H1 (cell line): ENCODE measurements at regions of chr6 and their contacts with region 1.

Region 1: DNA sequence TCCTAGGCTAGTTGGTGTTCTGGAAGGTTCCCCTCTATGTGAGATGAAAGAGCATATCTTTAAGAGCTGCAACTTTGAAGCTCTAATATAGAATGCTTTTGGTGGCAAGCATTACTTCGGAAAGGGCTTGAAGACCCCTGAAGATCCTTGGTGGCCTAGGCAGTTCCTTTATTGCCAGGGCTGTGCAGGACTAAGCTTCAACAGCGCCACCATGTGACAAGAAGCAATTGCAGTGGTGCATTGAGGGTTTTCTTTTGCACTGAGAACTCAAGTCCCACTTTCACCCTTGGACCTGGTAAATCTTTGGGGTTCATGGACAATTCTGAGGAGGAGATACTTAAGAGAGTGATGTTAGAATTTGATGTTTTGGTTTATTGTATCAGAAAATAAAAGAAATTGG is 237.4 kb upstream of the GMDS start:
- DNase-seq: no peak
- H3K4me3 ChIP-seq: no peak overlapping the region
- H3K27ac ChIP-seq: no peak overlapping the region
- H3K4me1 ChIP-seq: no peaks in the 10 kb centered on the region
- H3K27me3 ChIP-seq: peaks cover 0 to 2% (median 0%) of the 10 kb centered on the region in 4 experiments; a peak in 1 of 7 replicates
- CTCF ChIP-seq: peak; percentile 27 to 48 (median 30)
- EP300 ChIP-seq: no peak
- POLR2A ChIP-seq: no peak
- RAD21 ChIP-seq: peak; percentile 46 to 51

Region 2: DNA sequence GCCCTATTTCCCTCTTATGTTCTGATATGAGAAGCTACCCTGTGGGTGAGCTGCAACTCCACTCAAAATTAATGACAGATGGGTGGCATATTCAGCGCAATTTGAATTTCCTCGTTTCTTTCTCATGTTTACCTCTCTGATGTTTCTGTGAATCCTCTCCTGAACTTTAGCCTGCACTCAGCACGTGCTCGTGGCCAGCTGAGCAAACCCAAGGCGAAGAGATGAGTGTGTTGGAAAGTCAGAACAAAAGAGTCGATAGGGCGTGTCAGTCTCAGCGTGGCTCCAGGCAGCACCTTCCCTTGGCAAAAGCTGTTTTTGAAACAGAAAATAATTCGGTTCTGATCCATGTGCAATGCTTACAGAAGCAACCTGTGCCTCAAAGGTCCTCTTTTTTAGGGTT is 11.3 kb before region 1 on chr6:
- CTCF ChIA-PET with region 1: interaction called, 10 read pairs
- POLR2A ChIA-PET with region 1: no interaction called
- DNase-seq: no peak
- H3K4me3 ChIP-seq: no peak overlapping the region
- H3K27ac ChIP-seq: no peak overlapping the region
- H3K4me1 ChIP-seq: peaks cover 0 to 10% (median 4%) of the 10 kb centered on the region in 4 experiments; a peak in 5 of 7 replicates
- H3K27me3 ChIP-seq: peaks cover 0 to 2% (median 0%) of the 10 kb centered on the region in 4 experiments; a peak in 3 of 7 replicates
- CTCF ChIP-seq: no peak
- EP300 ChIP-seq: no peak
- POLR2A ChIP-seq: no peak
- RAD21 ChIP-seq: no peak